Naive thymus-derived CD4-positive, alpha-beta T cell (primary cell): ENCODE measurements at regions of chr2 and their contacts with region 1.

Region 1: DNA sequence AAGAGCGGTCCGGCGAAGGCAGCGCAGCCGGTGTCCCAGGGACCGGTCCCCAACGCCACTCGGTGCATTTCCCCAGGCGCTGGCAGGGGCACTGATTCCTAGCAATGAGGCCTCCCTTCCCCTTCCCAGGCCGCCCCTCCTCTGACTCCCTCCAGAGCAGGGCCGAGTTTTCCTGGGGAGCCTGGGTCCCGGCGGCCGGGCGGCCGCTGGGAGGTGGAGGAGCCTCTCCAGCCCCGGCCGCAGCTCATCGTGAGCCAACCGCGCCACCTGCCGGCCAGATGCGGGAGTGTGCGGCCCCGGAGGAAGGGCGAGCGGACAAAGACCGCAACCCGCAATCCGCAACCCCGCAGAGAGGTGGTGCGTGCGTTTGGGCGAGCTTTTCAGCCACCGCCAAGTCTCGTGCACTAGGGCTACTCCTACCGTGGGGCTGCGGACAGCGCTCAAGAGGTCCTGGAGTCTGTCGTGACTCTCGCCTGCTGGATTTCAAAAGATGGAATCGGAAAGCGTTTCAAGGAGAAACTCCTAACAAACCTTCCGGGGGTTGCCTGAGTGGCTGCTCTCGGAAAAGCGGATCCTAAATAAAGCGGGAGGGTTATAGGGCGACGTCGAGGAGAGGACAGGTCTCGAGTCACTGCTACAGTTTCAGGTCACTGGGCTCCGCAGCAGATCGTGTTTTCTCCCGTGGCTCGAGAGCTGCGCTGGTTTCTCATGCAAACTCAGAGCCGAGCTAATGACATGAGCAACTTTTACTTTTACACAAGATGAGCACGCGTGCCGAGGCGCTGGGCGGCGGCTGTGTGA is 1.5 kb upstream of the EPHA4 start:
- DNase-seq: peak; percentile 60 to 90 (median 77)
- ATAC-seq: peak; percentile 65
- H3K4me3 ChIP-seq: peak overlapping the region; percentile 91
- H3K4me3 Mint-ChIP-seq: peak overlapping the region; percentile 77 to 97 (median 86)
- H3K27ac ChIP-seq: no peak overlapping the region
- H3K27ac Mint-ChIP-seq: peak overlapping the region in 5 of 9 donors; percentile 10 to 76 (median 71)
- H3K4me1 ChIP-seq: peaks cover 11 to 17% of the 10 kb centered on the region in 2 donors
- H3K4me1 Mint-ChIP-seq: peaks cover 22 to 35% (median 31%) of the 10 kb centered on the region in 7 donors
- H3K27me3 ChIP-seq: peaks cover 0 to 4% of the 10 kb centered on the region in 2 donors
- H3K27me3 Mint-ChIP-seq: peaks cover 33 to 68% (median 59%) of the 10 kb centered on the region in 5 donors

Region 2: GRCh38 chr2:220460257-220460985 is 1113.2 kb before region 1 on chr2:
- CTCF ChIA-PET with region 1: no interaction called
- POLR2A ChIA-PET with region 1: no interaction called
- intact Hi-C with region 1: loop called in 1 of 2 experiments (anchors 10 kb)
- DNase-seq: no peak
- ATAC-seq: no peak
- H3K4me3 ChIP-seq: no peak overlapping the region
- H3K4me3 Mint-ChIP-seq: no peak overlapping the region
- H3K27ac ChIP-seq: no peak overlapping the region
- H3K27ac Mint-ChIP-seq: no peak overlapping the region
- H3K4me1 ChIP-seq: no peaks in the 10 kb centered on the region
- H3K4me1 Mint-ChIP-seq: no peaks in the 10 kb centered on the region
- H3K27me3 ChIP-seq: no peaks in the 10 kb centered on the region
- H3K27me3 Mint-ChIP-seq: no peaks in the 10 kb centered on the region

Region 3: DNA sequence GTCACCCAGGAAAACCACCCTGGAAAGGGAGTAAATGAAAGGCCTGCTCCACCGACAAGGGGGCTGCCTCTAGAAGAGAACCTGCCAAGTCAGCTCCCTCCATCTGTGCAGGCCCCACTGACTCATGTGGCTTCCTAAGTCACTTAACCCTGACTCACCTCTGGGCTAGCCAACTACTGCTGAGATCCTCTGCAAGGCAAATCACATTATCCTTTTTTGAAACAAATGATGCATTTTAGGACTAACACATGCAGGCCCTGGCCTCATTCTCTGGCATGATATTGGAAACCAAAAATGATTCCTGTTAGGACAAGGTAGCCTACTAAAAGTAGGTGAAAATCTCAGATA is 476.1 kb before region 1 on chr2:
- CTCF ChIA-PET with region 1: no interaction called
- POLR2A ChIA-PET with region 1: no interaction called
- intact Hi-C with region 1: loop called (anchors 10 kb)
- DNase-seq: no peak
- ATAC-seq: no peak
- H3K4me3 ChIP-seq: no peak overlapping the region
- H3K4me3 Mint-ChIP-seq: no peak overlapping the region
- H3K27ac ChIP-seq: no peak overlapping the region
- H3K27ac Mint-ChIP-seq: no peak overlapping the region
- H3K4me1 ChIP-seq: no peaks in the 10 kb centered on the region
- H3K4me1 Mint-ChIP-seq: no peaks in the 10 kb centered on the region
- H3K27me3 ChIP-seq: no peaks in the 10 kb centered on the region
- H3K27me3 Mint-ChIP-seq: peaks cover 0 to 6% (median 2%) of the 10 kb centered on the region in 5 donors

Region 4: DNA sequence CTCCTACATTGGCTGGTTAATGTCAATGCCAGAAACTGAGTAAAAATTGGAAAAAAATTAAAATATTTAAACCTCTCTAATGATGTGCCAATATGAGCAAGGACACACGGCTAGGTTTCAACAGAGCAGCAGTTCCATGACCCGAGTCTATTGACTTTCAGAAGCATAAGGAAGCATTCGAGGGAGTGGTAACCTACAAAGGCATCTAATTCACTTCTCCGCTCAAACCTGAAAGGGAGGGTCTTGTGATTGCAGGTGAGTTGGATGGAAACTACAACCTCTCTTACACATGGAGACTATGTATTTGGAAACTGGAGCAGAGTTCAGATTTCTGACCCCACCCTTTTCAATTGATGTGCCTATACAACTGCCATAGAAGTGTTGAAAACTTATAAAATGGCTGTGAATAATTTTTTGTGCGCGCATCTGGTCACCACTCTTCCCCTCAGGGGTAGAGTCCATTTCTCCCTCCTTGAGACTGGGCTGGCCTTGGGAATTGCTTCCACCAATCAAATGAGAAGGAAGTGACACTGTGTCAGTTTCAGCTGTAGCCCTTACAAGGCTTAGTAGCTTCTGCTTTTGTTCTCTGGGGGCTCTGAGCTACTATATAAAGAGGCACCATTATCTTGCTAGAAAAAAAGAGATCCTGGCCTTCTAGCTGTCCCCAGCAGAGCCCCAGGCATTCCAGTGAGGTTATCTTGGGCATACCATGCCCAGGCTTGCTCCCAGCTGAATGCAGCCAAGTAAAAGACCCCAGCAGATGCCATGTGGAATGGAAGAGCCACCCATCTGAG is 279.5 kb before region 1 on chr2:
- CTCF ChIA-PET with region 1: no interaction called
- POLR2A ChIA-PET with region 1: no interaction called
- intact Hi-C with region 1: loop called in 1 of 2 experiments (anchors 5 kb)
- DNase-seq: no peak
- ATAC-seq: no peak
- H3K4me3 ChIP-seq: no peak overlapping the region
- H3K4me3 Mint-ChIP-seq: no peak overlapping the region
- H3K27ac ChIP-seq: no peak overlapping the region
- H3K27ac Mint-ChIP-seq: no peak overlapping the region
- H3K4me1 ChIP-seq: no peaks in the 10 kb centered on the region
- H3K4me1 Mint-ChIP-seq: peaks cover 0 to under 1% (median 0%) of the 10 kb centered on the region in 7 donors
- H3K27me3 ChIP-seq: no peaks in the 10 kb centered on the region
- H3K27me3 Mint-ChIP-seq: peaks cover 7 to 15% (median 10%) of the 10 kb centered on the region in 5 donors

Region 5: DNA sequence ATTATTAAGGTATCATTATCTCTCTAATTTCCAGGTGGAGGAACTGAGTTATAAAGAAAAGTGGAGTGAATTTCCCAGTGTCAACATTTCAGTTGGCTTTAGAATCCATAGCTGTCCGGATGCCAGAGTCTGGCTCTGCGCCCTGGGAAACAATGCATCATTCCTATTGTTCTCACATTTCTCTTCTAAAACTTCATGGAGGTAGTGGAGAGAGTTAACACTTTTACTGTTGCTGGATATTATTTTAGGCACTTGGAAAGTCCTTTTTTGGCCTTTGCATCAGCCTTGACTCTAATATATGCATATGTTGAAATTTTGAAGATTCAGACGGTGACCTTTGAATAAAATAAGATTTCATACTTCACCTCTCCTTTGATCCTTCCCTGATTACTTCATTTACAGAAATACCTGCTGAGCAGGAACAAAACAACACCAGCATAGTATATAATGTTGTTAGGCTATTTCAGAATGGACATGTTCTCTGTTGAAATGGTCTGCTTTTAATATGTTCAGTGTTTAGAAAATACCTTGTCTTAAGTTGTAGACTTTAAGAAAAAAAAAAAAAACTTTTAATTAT is 150.3 kb before region 1 on chr2:
- CTCF ChIA-PET with region 1: no interaction called
- POLR2A ChIA-PET with region 1: interaction called, 4 read pairs
- intact Hi-C with region 1: loop called in 1 of 2 experiments (anchors 5 kb)
- DNase-seq: no peak
- ATAC-seq: no peak
- H3K4me3 ChIP-seq: no peak overlapping the region
- H3K4me3 Mint-ChIP-seq: no peak overlapping the region
- H3K27ac ChIP-seq: no peak overlapping the region
- H3K27ac Mint-ChIP-seq: peak overlapping the region in 1 of 9 donors; percentile 52
- H3K4me1 ChIP-seq: peaks cover 4 to 13% of the 10 kb centered on the region in 2 donors
- H3K4me1 Mint-ChIP-seq: peaks cover 2 to 28% (median 17%) of the 10 kb centered on the region in 7 donors
- H3K27me3 ChIP-seq: no peaks in the 10 kb centered on the region
- H3K27me3 Mint-ChIP-seq: no peaks in the 10 kb centered on the region

Region 6: DNA sequence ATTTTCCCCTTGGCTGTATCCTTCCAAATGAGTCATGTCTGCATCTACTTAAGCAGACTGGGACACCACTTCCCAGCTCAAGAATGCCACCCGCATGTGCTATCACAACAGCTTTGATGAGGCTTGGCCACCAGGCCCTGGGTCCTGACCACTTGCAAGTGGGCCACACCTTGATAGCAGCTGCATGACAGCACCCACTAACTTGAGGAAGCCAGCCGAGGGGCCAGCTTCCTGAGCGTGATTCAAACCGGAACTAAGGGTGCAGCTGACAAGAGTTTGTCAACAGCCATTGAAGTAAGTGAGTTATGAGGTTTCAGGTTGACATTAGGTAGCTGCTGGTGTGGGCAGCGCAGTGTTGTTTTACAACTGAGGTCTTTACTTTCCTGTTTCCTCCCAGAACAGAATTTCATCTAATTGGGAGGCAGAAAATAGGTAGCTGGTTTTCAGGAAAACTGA is 55.9 kb before region 1 on chr2:
- CTCF ChIA-PET with region 1: interaction called, 4 read pairs
- POLR2A ChIA-PET with region 1: interaction called, 45 read pairs
- intact Hi-C with region 1: loop called (anchors 1 kb)
- DNase-seq: peak; percentile 25 to 86 (median 74)
- ATAC-seq: peak; percentile 79
- H3K4me3 ChIP-seq: peak overlapping the region; percentile 43
- H3K4me3 Mint-ChIP-seq: no peak overlapping the region
- H3K27ac ChIP-seq: peak overlapping the region; percentile 66
- H3K27ac Mint-ChIP-seq: no peak overlapping the region
- H3K4me1 ChIP-seq: peaks cover 46 to 53% of the 10 kb centered on the region in 2 donors
- H3K4me1 Mint-ChIP-seq: peaks cover 0 to 31% (median 10%) of the 10 kb centered on the region in 7 donors
- H3K27me3 ChIP-seq: no peaks in the 10 kb centered on the region
- H3K27me3 Mint-ChIP-seq: peaks cover 0 to 6% (median 0%) of the 10 kb centered on the region in 5 donors

Region 7: DNA sequence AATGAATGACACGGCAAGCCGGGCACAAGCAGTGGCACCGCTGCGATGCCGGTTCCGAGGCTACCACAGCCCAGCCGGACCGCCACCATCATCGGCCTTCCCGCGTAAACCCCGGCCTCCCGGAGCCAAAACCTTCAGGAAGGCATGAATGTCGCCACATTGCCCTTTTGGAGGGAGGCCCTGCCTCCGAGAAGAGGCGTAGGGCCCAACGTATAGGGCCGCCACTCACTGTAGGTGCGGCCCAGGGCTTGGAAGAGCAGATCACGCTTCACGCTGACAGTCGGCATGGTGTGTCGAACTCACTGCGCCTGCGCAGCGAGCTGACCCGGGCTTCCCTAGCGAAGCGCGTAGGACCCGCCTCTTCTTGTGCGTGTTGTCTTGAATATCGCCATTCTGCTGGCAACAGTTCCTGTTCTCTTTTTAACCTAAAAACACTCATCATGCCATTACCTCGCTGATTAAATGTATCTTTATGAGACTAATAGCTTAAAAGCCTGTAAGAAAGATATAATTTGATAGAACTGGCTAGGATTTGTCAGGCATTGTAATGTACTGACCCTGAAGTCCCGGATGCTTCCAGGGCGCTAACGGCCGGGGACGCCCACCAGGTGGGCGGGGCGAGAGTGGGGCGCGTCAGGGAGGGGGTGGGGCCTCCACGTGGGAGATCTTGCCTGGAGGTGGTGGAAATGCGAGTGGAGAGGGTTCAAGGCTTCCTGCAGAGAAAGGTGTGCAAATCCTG is 1082.3 kb after region 1 on chr2 and contains the start of gene FARSB:
- CTCF ChIA-PET with region 1: no interaction called
- POLR2A ChIA-PET with region 1: no interaction called
- intact Hi-C with region 1: loop called in 1 of 2 experiments (anchors 5 kb)
- DNase-seq: peak; percentile 86 to 98 (median 94)
- ATAC-seq: peak; percentile 96
- H3K4me3 ChIP-seq: peak within 1 kb of the TSS; percentile 82
- H3K4me3 Mint-ChIP-seq: peak within 1 kb of the TSS; percentile 95 to 100 (median 99)
- H3K27ac ChIP-seq: peak within 1 kb of the TSS; percentile 94
- H3K27ac Mint-ChIP-seq: peak within 1 kb of the TSS; percentile 98 to 100 (median 99)
- H3K4me1 ChIP-seq: peaks cover 18 to 20% of the 10 kb centered on the region in 2 donors
- H3K4me1 Mint-ChIP-seq: peaks cover 30 to 59% (median 45%) of the 10 kb centered on the region in 7 donors
- H3K27me3 ChIP-seq: no peaks in the 10 kb centered on the region
- H3K27me3 Mint-ChIP-seq: no peaks in the 10 kb centered on the region
- total RNA-seq, gene FARSB: 10.5 to 23.3 (median 13.8) TPM

Region 8: GRCh38 chr2:223185638-223186037 is 1612.0 kb after region 1 on chr2:
- CTCF ChIA-PET with region 1: no interaction called
- POLR2A ChIA-PET with region 1: no interaction called
- intact Hi-C with region 1: no loop called
- DNase-seq: no peak
- ATAC-seq: no peak
- H3K4me3 ChIP-seq: no peak overlapping the region
- H3K4me3 Mint-ChIP-seq: no peak overlapping the region
- H3K27ac ChIP-seq: no peak overlapping the region
- H3K27ac Mint-ChIP-seq: no peak overlapping the region
- H3K4me1 ChIP-seq: no peaks in the 10 kb centered on the region
- H3K4me1 Mint-ChIP-seq: no peaks in the 10 kb centered on the region
- H3K27me3 ChIP-seq: no peaks in the 10 kb centered on the region
- H3K27me3 Mint-ChIP-seq: peaks cover 0 to 8% (median 7%) of the 10 kb centered on the region in 5 donors